ENCODE measurements at regions of chr2 and their contacts with region 1.

Region 1: GRCh38 chr2:111054791-111055691 is 65.7 kb upstream of the BCL2L11 start:
- DNase-seq: peak; percentile 75
- ATAC-seq: peak; percentile 84
- H3K4me3 ChIP-seq: no peak overlapping the region
- H3K27ac ChIP-seq: no peak overlapping the region
- H3K4me1 ChIP-seq: peaks cover 45% of the 10 kb centered on the region
- H3K27me3 ChIP-seq: peaks cover 0 to 17% of the 10 kb centered on the region in 2 experiments; a peak in 3 of 4 replicates
- CTCF ChIP-seq: no peak
- EP300 ChIP-seq: peak; percentile 84 to 88; a peak in 3 of 4 replicates
- POLR2A ChIP-seq: no peak
- RAD21 ChIP-seq: 0 out of 2 replicates have a peak, but pooled peaks have one; percentile 1

Region 2: GRCh38 chr2:110853507-110853906 is 201.5 kb before region 1 on chr2:
- CTCF ChIA-PET with region 1: interaction called, 7 read pairs
- POLR2A ChIA-PET with region 1: interaction called, 3 read pairs
- RAD21 ChIA-PET with region 1: interaction called, 3 read pairs
- SMC1A ChIA-PET with region 1: interaction called, 5 read pairs
- in situ Hi-C with region 1: no loop called
- intact Hi-C with region 1: loop called (anchors 10 kb)
- DNase-seq: no peak
- ATAC-seq: peak; percentile 79
- H3K4me3 ChIP-seq: no peak overlapping the region
- H3K27ac ChIP-seq: no peak overlapping the region
- H3K4me1 ChIP-seq: peaks cover 7% of the 10 kb centered on the region; the same call in 1 of the 2 replicates
- H3K27me3 ChIP-seq: no peaks in the 10 kb centered on the region; a peak in 1 of 4 replicates
- CTCF ChIP-seq: peak; percentile 62 to 76 (median 63)
- EP300 ChIP-seq: no peak
- POLR2A ChIP-seq: no peak
- RAD21 ChIP-seq: peak; percentile 66

Region 3: DNA sequence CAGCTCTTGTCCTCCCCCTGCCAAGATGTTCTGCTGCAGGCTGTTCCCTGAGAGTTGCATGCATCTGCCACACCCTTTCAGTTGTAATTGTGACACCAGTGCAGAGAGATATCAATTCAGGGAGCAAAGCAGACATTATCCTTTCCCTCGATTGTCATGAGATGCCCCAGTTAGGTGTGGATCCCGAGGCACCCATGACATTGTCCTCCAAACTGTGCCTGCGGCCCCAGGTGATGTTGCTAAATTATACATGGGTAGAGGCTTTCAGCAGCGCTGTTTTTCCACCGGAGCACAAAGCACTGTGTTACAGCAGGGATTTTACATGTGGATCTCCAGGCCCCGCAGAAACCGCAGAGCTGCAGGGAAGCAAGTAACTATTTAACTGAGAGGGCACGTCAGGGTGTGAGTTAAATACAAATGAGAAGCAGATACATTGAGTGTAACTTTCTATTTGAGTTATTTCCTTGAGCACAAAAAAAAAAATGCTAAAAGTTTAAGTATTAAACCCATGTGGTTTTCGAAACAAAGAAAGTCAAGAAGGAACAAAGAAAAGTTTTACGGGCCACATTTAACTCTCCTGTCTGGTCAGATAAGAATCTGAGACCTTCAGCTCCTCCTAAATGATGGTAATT is 24.7 kb before region 1 on chr2:
- CTCF ChIA-PET with region 1: interaction called, 4 read pairs
- POLR2A ChIA-PET with region 1: interaction called, 4 read pairs
- RAD21 ChIA-PET with region 1: interaction called, 6 read pairs
- SMC1A ChIA-PET with region 1: interaction called, 18 read pairs
- in situ Hi-C with region 1: no loop called
- intact Hi-C with region 1: no loop called
- DNase-seq: no peak
- ATAC-seq: peak; percentile 81
- H3K4me3 ChIP-seq: no peak overlapping the region
- H3K27ac ChIP-seq: no peak overlapping the region
- H3K4me1 ChIP-seq: peaks cover 11% of the 10 kb centered on the region
- H3K27me3 ChIP-seq: peaks cover 0 to 11% of the 10 kb centered on the region in 2 experiments; a peak in 3 of 4 replicates
- CTCF ChIP-seq: no peak
- EP300 ChIP-seq: peak in 1 of 2 experiments; percentile 43; a peak in 2 of 4 replicates
- POLR2A ChIP-seq: no peak
- RAD21 ChIP-seq: no peak

Region 4: DNA sequence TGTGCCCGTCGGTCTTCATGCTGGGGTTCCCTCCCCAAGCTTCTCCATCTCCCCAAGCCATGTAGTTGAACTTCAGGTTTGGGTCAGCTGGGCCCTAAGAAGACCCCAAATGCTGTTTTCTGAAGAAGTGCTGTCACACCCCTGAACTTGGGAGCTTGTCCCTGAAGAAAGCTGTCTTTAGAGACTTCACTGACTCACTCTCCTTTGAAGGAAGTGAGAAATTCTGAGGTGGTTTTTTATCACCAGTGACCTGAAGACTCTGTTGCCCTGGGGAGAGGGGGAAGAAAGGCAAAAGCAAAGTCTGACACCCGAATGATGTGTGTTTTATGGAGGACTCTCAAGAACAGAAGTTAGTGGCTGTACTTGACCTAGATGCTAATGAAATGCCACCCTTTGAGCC is 17.9 kb before region 1 on chr2:
- CTCF ChIA-PET with region 1: interaction called, 6 read pairs
- POLR2A ChIA-PET with region 1: interaction called, 7 read pairs
- RAD21 ChIA-PET with region 1: interaction called, 13 read pairs
- SMC1A ChIA-PET with region 1: interaction called, 18 read pairs
- in situ Hi-C with region 1: no loop called
- intact Hi-C with region 1: loop called (anchors 2 kb)
- DNase-seq: peak; percentile 31
- ATAC-seq: peak; percentile 80
- H3K4me3 ChIP-seq: no peak overlapping the region
- H3K27ac ChIP-seq: no peak overlapping the region
- H3K4me1 ChIP-seq: peaks cover 3% of the 10 kb centered on the region
- H3K27me3 ChIP-seq: peaks cover 2 to 6% of the 10 kb centered on the region in 2 experiments; a peak in 3 of 4 replicates
- CTCF ChIP-seq: no peak
- EP300 ChIP-seq: peak in 1 of 2 experiments; percentile 33; a peak in 1 of 4 replicates
- POLR2A ChIP-seq: no peak
- RAD21 ChIP-seq: no peak

Region 5: DNA sequence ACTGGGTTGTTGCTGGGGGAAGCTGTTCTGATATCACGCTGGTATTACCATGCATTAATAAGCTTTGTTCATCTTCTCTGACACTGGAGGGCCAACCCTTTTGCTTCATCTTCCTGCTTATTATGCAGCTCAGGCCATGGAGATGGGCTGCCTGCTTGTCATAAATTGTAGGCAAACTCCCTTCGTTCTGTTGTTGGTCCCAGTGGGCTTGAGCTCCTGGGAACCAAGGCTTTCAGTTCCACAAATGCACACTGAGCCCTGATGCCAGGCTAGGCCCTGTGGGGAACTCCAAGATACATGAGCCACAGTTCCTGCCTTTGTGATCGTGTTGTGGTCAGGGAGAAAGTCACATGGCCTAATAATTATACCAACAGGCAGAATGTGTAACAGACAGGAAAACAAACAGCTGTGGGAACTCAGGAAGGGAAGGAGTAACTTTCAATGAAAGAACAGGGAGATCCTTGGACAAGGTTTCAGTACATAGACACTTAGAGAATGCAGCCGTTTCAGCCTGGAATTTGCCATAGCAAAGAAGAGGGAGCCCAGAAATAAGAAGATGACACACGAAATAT is 16.6 kb after region 1 on chr2:
- CTCF ChIA-PET with region 1: interaction called, 13 read pairs
- POLR2A ChIA-PET with region 1: no interaction called
- RAD21 ChIA-PET with region 1: interaction called, 4 read pairs
- SMC1A ChIA-PET with region 1: interaction called, 6 read pairs
- in situ Hi-C with region 1: no loop called
- intact Hi-C with region 1: no loop called
- DNase-seq: peak; percentile 35
- ATAC-seq: peak; percentile 83
- H3K4me3 ChIP-seq: no peak overlapping the region
- H3K27ac ChIP-seq: no peak overlapping the region
- H3K4me1 ChIP-seq: no peaks in the 10 kb centered on the region
- H3K27me3 ChIP-seq: no peaks in the 10 kb centered on the region
- CTCF ChIP-seq: no peak
- EP300 ChIP-seq: no peak
- POLR2A ChIP-seq: no peak
- RAD21 ChIP-seq: no peak

Measured in GM12878 (cell line).